Activated B cell treated with CpG ODN at 0.5 μM for 24 hours (primary cell): ENCODE measurements at regions of chrX and their contacts with region 1.

Region 1: DNA sequence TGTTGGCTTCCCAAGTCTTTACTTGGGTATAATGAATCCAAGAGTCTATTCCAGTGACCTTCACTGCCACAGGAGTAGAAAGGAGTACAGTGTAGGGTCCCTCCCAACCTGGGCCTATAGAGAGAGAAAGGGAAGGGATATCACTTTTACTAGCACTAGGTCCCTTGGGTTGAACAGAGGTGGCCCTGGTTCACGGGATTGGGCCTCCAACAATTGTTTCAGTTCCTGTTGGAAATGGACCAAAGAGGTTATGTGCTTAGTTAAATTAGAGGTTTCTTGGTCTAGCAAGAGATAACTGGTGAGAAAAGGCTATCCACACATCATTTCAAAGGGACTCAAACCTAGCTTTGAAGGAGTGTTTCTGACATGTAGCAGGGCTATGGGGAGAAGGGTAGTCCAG is 57.1 kb upstream of the MED14 start:
- DNase-seq: no peak
- ATAC-seq: no peak
- H3K4me3 Mint-ChIP-seq: no peak overlapping the region
- H3K27ac Mint-ChIP-seq: no peak overlapping the region
- H3K4me1 Mint-ChIP-seq: peaks cover 1% of the 10 kb centered on the region
- H3K27me3 Mint-ChIP-seq: peaks cover 3% of the 10 kb centered on the region
- CTCF ChIP-seq: no peak

Region 2: DNA sequence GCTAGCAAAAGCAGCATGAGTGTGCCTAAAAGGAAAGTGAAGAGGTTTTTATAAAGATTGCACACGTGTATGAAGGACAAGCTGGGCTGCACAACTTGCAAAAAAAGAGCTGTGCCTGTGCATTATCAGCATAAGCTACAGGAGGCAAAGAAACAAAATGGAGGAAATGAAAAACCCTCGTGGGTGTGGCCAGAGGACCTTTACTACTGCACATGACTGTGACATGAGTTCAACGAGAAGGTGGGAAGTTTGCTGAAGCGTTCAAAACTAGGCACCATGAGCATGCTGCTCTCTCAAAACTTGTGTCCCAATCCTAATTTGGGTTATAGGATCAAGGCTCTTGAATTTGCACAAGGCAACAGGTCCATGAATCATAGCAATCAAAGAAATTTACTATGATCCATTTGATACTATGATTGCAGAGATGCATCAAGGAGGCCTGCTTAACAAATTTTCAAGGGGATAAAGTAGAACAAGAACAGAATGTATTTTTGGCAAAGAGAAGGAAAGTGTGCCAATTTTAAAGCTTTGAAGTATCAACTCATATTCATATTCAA is 107.0 kb before region 1 on chrX:
- CTCF ChIA-PET with region 1: interaction called, 4 read pairs
- POLR2A ChIA-PET with region 1: no interaction called
- intact Hi-C with region 1: loop called (anchors 10 kb)
- DNase-seq: no peak
- ATAC-seq: peak; percentile 87
- H3K4me3 Mint-ChIP-seq: peak overlapping the region; percentile 2
- H3K27ac Mint-ChIP-seq: peak overlapping the region; percentile 56
- H3K4me1 Mint-ChIP-seq: peaks cover 22% of the 10 kb centered on the region
- H3K27me3 Mint-ChIP-seq: no peaks in the 10 kb centered on the region
- CTCF ChIP-seq: no peak